Mammary epithelial cell (primary cell): ENCODE measurements at regions of chr12 and their contacts with region 1.

Region 1: DNA sequence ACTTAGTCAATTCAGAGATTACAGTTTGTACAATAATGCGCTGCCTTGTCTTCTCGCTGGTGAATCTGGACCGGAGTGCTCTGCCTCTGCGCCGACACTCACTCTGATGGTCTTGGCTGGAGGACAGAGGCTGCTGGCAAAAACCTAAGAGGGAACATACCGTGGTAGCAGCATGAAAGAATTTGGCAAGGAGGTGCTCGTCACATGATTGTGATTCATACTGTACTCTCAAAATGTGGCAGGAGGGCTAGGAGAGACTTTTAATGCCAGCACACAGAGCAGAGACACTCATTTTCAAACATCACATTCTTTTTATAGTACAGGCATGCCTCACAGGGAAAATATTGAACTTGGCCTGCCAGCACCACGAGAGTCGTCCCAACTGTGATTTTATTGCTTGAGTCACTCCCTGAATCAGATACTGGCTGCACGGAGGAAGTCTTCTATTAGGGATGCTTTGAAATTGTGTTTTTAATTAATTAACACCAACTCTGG is 67.8 kb downstream of the HMGA2 start:
- DNase-seq: peak; percentile 97
- H3K4me3 ChIP-seq: no peak overlapping the region
- H3K27ac ChIP-seq: peak overlapping the region; percentile 78
- H3K4me1 ChIP-seq: peaks cover 78% of the 10 kb centered on the region
- H3K27me3 ChIP-seq: no peaks in the 10 kb centered on the region
- CTCF ChIP-seq: no peak

Region 2: DNA sequence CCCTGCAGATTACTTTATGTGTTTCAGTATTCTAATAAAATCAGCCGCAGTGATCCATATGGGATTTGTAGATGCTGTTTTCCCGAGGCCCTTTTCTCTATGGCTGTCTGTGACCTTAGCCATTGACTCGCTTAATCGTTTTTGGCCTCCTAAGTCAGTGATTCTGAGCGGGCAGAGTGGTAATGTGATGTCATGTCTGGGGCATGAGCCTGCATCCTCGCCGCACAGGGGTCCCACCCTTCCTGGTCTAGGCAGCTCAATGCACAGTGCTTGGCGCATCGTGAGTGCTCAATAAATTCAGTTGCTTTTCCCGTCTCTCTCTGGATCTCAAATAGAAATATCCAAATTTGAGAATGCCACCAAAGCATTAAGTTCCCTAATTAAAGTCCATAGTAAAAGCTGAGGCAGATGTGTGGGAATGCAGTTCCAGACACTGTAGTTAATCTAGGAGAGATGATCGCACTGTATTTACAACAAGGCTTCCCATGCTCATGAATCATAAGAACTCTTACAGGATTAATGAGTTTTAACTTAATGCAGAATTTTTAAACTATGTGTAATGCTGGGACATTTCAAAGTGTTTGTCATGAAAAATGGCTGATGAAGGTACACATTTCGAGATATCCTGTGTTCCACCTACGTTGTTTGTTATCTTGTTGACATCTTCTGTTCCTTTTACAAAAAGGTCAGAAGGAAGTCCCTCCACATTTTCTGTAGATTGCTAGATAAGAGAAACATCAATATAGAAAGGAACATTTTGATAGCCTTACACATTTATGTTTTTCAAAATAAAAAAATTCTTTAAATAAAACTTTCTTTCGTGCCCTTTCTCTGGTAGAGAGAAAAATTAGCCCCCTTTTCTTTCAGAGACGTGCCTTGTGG is 38.3 kb before region 1 on chr12:
- CTCF ChIA-PET with region 1: no interaction called
- dilution Hi-C with region 1: no loop called
- in situ Hi-C with region 1: no loop called
- intact Hi-C with region 1: no loop called
- DNase-seq: no peak
- H3K4me3 ChIP-seq: no peak overlapping the region
- H3K27ac ChIP-seq: no peak overlapping the region
- H3K4me1 ChIP-seq: no peaks in the 10 kb centered on the region
- H3K27me3 ChIP-seq: no peaks in the 10 kb centered on the region
- CTCF ChIP-seq: no peak

Region 3: DNA sequence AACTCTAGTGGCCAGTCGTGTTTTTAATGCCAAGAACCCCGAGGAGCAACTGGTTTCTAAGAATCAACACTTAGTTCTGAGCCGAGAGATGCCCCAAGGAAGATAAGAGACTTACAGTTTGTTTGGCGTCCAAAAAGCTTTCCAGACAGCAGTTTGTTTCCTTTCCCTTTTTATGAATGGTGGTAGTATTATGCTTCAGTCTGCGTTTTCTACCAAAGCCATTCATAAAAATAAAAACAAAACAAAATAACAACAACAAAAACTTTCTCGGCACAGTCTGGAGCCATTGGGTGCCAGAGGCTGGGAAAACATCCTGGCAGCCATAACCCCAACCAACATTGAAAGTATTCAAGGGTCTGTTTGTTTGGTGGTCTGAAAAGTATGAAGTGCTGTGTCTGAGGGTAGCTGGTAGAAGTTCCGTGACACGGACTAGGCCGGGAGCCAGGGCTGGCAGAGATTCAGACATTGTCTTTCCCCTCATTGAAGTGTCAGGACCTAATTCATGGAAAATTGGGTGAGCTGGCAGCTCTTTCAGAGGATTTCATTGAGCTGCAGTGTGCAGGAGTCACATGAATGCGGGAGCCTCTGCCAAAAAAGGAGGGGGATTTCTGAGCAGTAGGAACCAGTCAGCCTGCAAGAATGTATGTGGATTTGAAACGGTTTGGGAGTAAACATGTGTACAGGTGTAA is 56.4 kb after region 1 on chr12:
- CTCF ChIA-PET with region 1: no interaction called
- dilution Hi-C with region 1: no loop called
- in situ Hi-C with region 1: no loop called
- intact Hi-C with region 1: loop called (anchors 2 kb)
- DNase-seq: peak; percentile 94
- H3K4me3 ChIP-seq: no peak overlapping the region
- H3K27ac ChIP-seq: peak overlapping the region; percentile 85
- H3K4me1 ChIP-seq: peaks cover 80% of the 10 kb centered on the region
- H3K27me3 ChIP-seq: no peaks in the 10 kb centered on the region
- CTCF ChIP-seq: no peak